ENCODE measurements at regions of chr11 and their contacts with region 1.

Region 1: GRCh38 chr11:87037450-87038234 is at the start of gene TMEM135:
- DNase-seq: peak; percentile 93 to 94
- H3K4me3 ChIP-seq: peak within 1 kb of the TSS; percentile 68 to 100 (median 70)
- H3K27ac ChIP-seq: peak within 1 kb of the TSS; percentile 72 to 98 (median 94)
- H3K4me1 ChIP-seq: peaks cover 23 to 25% of the 10 kb centered on the region in 2 donors
- H3K27me3 ChIP-seq: no peaks in the 10 kb centered on the region
- CTCF ChIP-seq: peak in 2 of 6 experiments; percentile 7
- POLR2A ChIP-seq: peak in 1 of 2 donors; percentile 88
- total RNA-seq, gene TMEM135: 17.2 to 69.6 (median 33.0) TPM

Region 2: GRCh38 chr11:86740709-86741483 is 296.7 kb before region 1 on chr11:
- intact Hi-C with region 1: no loop called
- DNase-seq: peak; percentile 66 to 73
- H3K4me3 ChIP-seq: no peak overlapping the region
- H3K27ac ChIP-seq: peak overlapping the region; percentile 94 to 96 (median 96)
- H3K4me1 ChIP-seq: peaks cover 17 to 41% of the 10 kb centered on the region in 2 donors
- H3K27me3 ChIP-seq: no peaks in the 10 kb centered on the region
- CTCF ChIP-seq: no peak
- POLR2A ChIP-seq: no peak

Region 3: GRCh38 chr11:86955361-86956120 is 82.1 kb before region 1 on chr11 and contains the start of gene FZD4:
- intact Hi-C with region 1: loop called (anchors 5 kb)
- DNase-seq: peak; percentile 92 to 93
- H3K4me3 ChIP-seq: peak within 1 kb of the TSS; percentile 77 to 99 (median 81)
- H3K27ac ChIP-seq: peak within 1 kb of the TSS; percentile 84 to 95 (median 93)
- H3K4me1 ChIP-seq: peaks cover 21 to 34% of the 10 kb centered on the region in 2 donors
- H3K27me3 ChIP-seq: no peaks in the 10 kb centered on the region
- CTCF ChIP-seq: peak in 3 of 6 experiments; percentile 5 to 41 (median 31)
- POLR2A ChIP-seq: peak; percentile 86 to 99
- total RNA-seq, gene FZD4: 32.9 to 70.8 (median 48.0) TPM